PC-3 (cell line): ENCODE measurements at regions of chr17 and their contacts with region 1.

Region 1: DNA sequence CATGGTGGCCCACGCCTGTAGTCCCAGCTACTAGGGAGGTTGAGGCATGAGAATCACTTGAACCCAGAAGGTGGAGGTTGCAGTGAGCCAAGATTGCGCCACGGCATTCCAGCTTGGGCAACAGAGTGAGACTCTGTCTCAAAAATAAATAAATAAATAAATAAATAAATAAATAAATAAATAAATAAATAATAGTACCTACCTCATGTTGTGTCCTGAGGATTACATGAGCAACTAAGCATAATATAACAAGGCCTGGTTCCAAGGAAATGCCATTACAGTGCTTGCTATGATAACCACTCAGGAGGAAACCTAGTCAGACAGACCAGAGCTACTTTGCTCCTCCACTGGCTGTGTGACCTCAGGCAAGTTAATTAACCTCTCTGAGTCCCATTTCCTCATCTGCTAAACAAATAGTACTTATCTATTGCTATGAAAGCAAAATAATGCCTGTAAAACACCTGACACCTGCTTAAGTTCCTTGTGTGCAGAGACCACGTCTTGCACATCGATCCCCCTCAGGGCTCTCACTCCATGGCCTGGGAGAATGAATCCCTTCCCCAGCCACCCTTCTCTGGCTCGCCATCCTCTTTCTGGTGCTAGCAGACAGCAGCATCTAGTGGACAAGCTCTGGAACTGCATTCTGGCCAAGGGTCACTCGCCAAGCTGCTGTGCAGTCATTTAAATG is 7.5 kb downstream of the EPOP start:
- DNase-seq: peak; percentile 74
- ATAC-seq: peak; percentile 82
- H3K4me3 ChIP-seq: no peak overlapping the region
- H3K27ac ChIP-seq: no peak overlapping the region
- H3K4me1 ChIP-seq: no peaks in the 10 kb centered on the region
- H3K27me3 ChIP-seq: no peaks in the 10 kb centered on the region
- CTCF ChIP-seq: peak; percentile 89

Region 2: DNA sequence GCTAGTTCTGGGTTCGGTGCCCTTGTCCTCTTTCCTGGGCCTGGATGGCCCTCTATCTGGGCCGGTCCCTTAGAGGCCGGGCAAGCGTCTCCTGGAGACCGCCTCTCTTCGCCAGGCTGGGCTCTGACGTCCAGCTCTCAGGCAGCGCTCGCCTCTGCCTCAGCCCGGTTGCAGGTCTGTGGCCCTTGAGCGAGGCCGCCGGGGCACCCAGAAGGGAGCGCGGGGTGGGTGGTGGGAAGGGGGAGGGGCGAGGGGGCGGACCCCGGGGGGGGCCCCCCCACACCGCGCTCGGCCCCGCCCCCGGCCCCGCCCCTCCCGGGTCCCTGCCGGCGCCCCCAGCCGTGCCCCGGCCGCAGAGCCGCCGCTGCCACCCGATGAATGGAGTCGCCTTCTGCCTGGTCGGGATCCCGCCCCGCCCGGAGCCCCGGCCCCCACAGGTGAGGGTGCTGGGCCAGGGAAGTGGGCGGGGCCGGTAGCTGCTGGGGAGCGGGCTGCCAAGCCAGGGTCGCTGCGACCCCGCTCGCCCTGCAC is 239.1 kb before region 1 on chr17 and contains the start of gene ARHGAP23:
- CTCF ChIA-PET with region 1: no interaction called
- POLR2A ChIA-PET with region 1: no interaction called
- intact Hi-C with region 1: loop called (anchors 10 kb)
- DNase-seq: peak; percentile 41
- ATAC-seq: peak; percentile 73
- H3K4me3 ChIP-seq: peak within 1 kb of the TSS; percentile 82
- H3K27ac ChIP-seq: no peak within 1 kb of the TSS
- H3K4me1 ChIP-seq: peaks cover 12% of the 10 kb centered on the region
- H3K27me3 ChIP-seq: no peaks in the 10 kb centered on the region
- CTCF ChIP-seq: no peak
- total RNA-seq, gene ARHGAP23: 9.0 and 10.6 TPM in 2 replicates

Region 3: GRCh38 chr17:38557836-38558727 is 109.2 kb before region 1 on chr17:
- CTCF ChIA-PET with region 1: interaction called, 20 read pairs
- POLR2A ChIA-PET with region 1: no interaction called
- intact Hi-C with region 1: loop called (anchors 1 kb)
- DNase-seq: peak; percentile 94
- ATAC-seq: peak; percentile 92
- H3K4me3 ChIP-seq: peak overlapping the region; percentile 50; the same call in 1 of the 2 replicates
- H3K27ac ChIP-seq: peak overlapping the region; percentile 80
- H3K4me1 ChIP-seq: peaks cover 39% of the 10 kb centered on the region
- H3K27me3 ChIP-seq: no peaks in the 10 kb centered on the region
- CTCF ChIP-seq: peak; percentile 75